ENCODE measurements at regions of chr7 and their contacts with region 1.

Region 1: GRCh38 chr7:90276033-90276728 is 31.2 kb downstream of the CFAP69 start:
- DNase-seq: no peak
- H3K4me3 ChIP-seq: no peak overlapping the region
- H3K27ac ChIP-seq: no peak overlapping the region
- H3K4me1 ChIP-seq: peaks cover 8 to 9% of the 10 kb centered on the region in 2 experiments; a peak in 2 of 4 replicates
- H3K27me3 ChIP-seq: no peaks in the 10 kb centered on the region
- CTCF ChIP-seq: no peak
- EP300 ChIP-seq: no peak
- RAD21 ChIP-seq: no peak

Region 2: GRCh38 chr7:90262438-90262837 is 13.7 kb before region 1 on chr7:
- CTCF ChIA-PET with region 1: interaction called, 15 read pairs
- POLR2A ChIA-PET with region 1: no interaction called
- DNase-seq: peak; percentile 45
- H3K4me3 ChIP-seq: no peak overlapping the region
- H3K27ac ChIP-seq: no peak overlapping the region
- H3K4me1 ChIP-seq: peaks cover 0 to 12% of the 10 kb centered on the region in 2 experiments; a peak in 2 of 4 replicates
- H3K27me3 ChIP-seq: no peaks in the 10 kb centered on the region
- CTCF ChIP-seq: peak; percentile 78
- EP300 ChIP-seq: no peak
- RAD21 ChIP-seq: peak; percentile 83

Region 3: DNA sequence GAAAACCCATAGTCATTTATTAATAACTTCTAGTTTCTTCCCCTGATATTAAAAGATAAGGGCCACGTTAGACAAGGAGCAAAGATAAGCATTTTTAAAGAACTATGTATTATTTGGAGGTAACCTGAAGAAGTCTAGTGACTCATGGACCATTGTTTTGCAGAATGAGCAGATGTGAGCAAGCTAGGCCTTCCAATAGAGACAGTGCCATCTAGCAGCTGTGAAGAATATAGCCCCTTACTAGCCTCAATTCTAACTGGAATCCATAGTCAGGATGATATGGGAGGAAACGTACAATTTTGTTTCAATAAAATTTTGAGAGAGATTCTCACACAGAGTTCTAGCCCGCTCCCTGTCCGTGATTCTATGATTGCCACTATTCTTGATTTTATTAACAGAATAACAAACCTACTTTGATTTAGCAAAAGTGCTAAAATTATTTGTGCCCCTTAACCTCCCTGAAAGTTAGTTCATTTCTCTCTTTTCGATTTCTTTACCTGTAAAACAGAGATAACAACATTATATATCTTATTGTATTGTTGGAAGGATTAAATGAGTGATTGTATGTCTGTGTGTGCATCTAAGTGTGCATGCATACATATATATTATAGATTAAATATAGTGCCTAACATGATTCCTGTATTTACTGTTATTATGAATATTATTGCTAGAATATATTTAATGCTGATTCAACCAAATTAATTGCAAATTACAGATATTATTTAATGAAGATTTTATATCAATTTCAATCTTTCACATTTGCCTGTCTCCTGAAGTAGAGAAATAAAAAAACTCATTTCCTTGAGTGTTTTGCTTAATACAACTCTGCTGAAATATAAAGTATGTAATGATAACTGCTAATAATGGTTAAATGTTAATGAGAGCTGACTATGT is 22.2 kb after region 1 on chr7:
- CTCF ChIA-PET with region 1: interaction called, 14 read pairs
- POLR2A ChIA-PET with region 1: no interaction called
- DNase-seq: peak; percentile 30
- H3K4me3 ChIP-seq: no peak overlapping the region
- H3K27ac ChIP-seq: no peak overlapping the region
- H3K4me1 ChIP-seq: no peaks in the 10 kb centered on the region
- H3K27me3 ChIP-seq: no peaks in the 10 kb centered on the region
- CTCF ChIP-seq: peak; percentile 81
- EP300 ChIP-seq: no peak
- RAD21 ChIP-seq: peak; percentile 72

Measured in SK-N-SH (cell line).